Lower lobe of right lung (tissue), 2 donors: ENCODE measurements at regions of chr1 and their contacts with region 1.

Region 1: DNA sequence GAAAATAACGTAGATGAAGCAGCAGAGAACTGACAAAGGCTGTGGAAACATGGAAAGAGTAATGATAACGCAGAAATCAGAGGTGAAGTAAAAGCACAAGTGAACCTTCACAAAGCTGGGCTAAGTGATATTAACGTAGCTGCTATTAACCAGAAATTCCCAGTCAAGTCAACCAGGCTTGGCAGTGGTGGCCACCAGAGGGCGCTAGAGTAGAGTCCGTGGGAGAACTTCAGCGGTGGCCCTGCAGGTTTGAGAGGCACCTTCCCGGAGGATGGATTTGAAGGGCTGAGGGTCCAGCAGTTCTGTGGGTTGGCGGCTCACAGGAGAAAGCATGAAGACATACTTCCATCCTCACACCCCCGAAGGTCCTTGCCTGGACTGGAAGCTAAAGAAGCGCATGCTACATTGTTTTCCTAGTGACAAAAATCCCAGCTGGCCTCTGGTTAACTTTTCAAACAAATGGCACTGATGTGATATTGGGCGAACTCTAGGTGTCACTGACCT is 81.7 kb upstream of the ZNF648 start:
- DNase-seq: peak; percentile 92
- ATAC-seq: peak; percentile 84 to 86
- H3K4me3 ChIP-seq: no peak overlapping the region
- H3K27ac ChIP-seq: peak overlapping the region; percentile 94
- H3K4me1 ChIP-seq: peaks cover 42% of the 10 kb centered on the region
- H3K27me3 ChIP-seq: no peaks in the 10 kb centered on the region
- CTCF ChIP-seq: peak; percentile 94

Region 2: DNA sequence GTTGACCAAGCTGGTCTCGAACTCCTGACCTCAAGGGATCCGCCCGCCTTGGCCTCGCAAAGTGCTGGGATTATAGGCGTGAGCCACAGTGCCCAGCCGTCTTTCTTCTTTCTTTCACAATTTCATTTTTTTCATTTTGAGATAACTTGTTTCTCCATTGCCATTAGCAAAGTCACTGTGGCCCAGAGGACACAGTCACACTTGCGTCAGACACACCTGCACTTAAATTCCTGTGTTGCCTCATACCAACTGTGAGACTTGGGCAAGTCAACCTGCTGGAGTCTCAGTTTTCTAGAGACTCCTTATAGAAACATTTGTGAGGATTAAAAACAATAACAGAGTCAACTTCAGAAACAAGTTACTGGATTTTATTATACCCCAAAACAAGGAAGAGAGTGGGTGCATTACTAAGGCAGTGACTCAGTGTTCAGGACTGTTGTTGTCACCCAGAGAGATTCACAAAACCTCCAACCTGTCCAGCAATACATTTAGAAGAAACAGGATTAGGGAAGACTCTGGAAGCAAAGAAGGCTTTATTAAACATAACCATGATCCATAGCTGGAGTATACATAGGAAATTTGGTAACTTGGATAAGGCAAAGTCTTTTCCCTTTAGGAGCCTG is 254.7 kb after region 1 on chr1:
- intact Hi-C with region 1: loop called (anchors 5 kb)
- DNase-seq: peak; percentile 55
- ATAC-seq: peak; percentile 59 to 81
- H3K4me3 ChIP-seq: no peak overlapping the region
- H3K27ac ChIP-seq: peak overlapping the region; percentile 44
- H3K4me1 ChIP-seq: peaks cover 21% of the 10 kb centered on the region
- H3K27me3 ChIP-seq: no peaks in the 10 kb centered on the region
- CTCF ChIP-seq: no peak